OCI-LY7 (cell line): ENCODE measurements at regions of chr11 and their contacts with region 1.

Region 1: DNA sequence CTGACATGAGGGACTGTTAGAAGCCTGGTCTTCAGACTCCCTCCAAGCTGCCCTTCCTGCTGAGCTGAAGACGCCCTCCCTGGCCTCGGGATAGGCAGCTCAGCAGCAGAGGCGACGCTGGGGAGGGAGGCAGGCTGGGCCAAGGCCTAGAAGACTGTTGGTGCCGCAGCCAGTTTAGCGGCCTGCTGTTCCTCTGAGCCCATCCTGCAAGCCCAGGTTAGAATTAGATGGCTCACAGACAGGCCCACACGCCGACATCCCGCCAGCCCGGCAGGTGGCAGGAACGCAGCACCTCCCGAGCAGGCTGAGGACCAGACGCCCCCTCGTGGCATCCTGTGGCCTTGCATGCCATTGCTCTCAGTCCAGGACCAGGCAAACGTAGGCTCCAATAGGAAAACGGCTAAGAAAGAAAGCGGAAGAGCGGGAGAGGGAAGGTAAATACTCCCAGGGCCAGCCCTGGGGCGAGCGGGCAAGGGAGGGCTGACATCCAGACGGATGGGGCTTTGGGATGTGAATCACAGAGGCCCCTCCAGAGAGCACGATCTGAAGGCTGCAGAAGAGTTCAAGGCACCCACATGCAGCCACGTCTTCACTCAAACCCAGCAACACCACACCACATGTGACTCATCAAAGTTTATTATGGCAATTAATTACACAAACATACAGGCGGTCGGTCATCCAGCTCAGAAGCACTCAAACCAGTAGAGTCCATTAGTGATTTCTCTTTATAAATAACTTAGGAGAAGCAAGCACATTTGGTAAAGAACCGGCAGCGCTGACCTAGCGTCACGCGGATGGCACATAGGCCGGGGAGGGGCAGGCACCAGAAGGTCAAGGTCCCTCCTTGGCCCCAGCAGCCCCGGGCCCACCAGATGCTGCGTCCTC is 27.6 kb downstream of the CD5 start:
- DNase-seq: peak; percentile 89
- H3K4me3 ChIP-seq: no peak overlapping the region
- H3K27ac ChIP-seq: no peak overlapping the region
- H3K4me1 ChIP-seq: peaks cover 8% of the 10 kb centered on the region
- CTCF ChIP-seq: peak; percentile 100

Region 2: DNA sequence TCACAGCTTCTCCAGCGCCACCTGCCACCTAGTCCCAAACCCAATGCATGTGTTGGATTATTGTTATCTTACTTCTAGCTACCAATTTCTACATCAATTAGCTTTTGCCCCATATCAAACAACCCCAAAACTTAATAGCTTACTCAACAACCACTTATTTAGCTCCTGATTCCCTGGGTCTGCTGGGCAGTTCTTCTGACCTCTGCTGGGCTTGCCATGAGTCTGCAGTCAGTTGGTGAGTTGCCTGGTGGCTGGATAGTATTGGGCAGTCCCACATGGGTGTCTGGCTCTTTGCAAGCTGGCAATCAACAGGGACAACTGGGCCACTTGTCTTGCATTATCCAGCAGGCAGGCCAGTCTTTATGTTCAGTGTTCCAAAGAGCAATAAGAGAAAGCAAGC is 386.8 kb before region 1 on chr11:
- CTCF ChIA-PET with region 1: no interaction called
- POLR2A ChIA-PET with region 1: no interaction called
- intact Hi-C with region 1: no loop called
- DNase-seq: no peak
- H3K4me3 ChIP-seq: no peak overlapping the region
- H3K27ac ChIP-seq: no peak overlapping the region
- H3K4me1 ChIP-seq: no peaks in the 10 kb centered on the region
- CTCF ChIP-seq: no peak

Region 3: GRCh38 chr11:60775420-60775961 is 354.4 kb before region 1 on chr11:
- CTCF ChIA-PET with region 1: no interaction called
- POLR2A ChIA-PET with region 1: no interaction called
- intact Hi-C with region 1: loop called (anchors 1 kb)
- DNase-seq: peak; percentile 91
- H3K4me3 ChIP-seq: no peak overlapping the region
- H3K27ac ChIP-seq: no peak overlapping the region
- H3K4me1 ChIP-seq: no peaks in the 10 kb centered on the region
- CTCF ChIP-seq: peak; percentile 93

Region 4: GRCh38 chr11:60970369-60970774 is 159.5 kb before region 1 on chr11:
- CTCF ChIA-PET with region 1: no interaction called
- POLR2A ChIA-PET with region 1: no interaction called
- intact Hi-C with region 1: loop called (anchors 1 kb)
- DNase-seq: peak; percentile 66
- H3K4me3 ChIP-seq: no peak overlapping the region
- H3K27ac ChIP-seq: no peak overlapping the region
- H3K4me1 ChIP-seq: no peaks in the 10 kb centered on the region
- CTCF ChIP-seq: peak; percentile 97

Region 5: GRCh38 chr11:61054927-61055562 is 74.8 kb before region 1 on chr11:
- CTCF ChIA-PET with region 1: no interaction called
- POLR2A ChIA-PET with region 1: no interaction called
- intact Hi-C with region 1: loop called (anchors 5 kb)
- DNase-seq: no peak
- H3K4me3 ChIP-seq: no peak overlapping the region
- H3K27ac ChIP-seq: no peak overlapping the region
- H3K4me1 ChIP-seq: no peaks in the 10 kb centered on the region
- CTCF ChIP-seq: no peak

Region 6: DNA sequence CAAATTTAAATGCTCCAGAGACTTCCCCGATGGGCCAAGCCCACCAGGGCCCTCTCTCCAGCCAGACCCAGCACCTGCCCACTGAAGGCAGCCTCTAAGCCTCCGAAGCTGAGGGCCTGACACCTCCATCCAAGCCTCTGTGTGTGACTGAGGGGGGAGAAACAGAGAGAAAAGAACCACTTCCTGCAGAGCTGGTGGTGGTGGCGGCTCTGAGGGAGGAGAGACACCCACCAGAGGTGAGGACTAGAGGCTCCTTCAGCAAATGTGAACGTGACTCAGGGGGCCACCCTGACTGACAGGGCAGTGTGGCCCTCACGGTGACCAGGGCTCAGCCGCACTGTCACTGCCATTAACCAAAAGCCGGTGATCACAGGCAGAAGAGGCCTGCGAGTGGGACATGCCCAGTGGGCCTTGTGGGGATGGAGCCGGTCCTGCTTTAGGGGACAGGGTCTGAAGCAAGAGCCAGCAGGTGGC is 58.6 kb before region 1 on chr11:
- CTCF ChIA-PET with region 1: no interaction called
- POLR2A ChIA-PET with region 1: no interaction called
- intact Hi-C with region 1: loop called (anchors 10 kb)
- DNase-seq: peak; percentile 72
- H3K4me3 ChIP-seq: peak overlapping the region; percentile 40
- H3K27ac ChIP-seq: peak overlapping the region; percentile 93
- H3K4me1 ChIP-seq: peaks cover 30% of the 10 kb centered on the region
- CTCF ChIP-seq: no peak

Region 7: DNA sequence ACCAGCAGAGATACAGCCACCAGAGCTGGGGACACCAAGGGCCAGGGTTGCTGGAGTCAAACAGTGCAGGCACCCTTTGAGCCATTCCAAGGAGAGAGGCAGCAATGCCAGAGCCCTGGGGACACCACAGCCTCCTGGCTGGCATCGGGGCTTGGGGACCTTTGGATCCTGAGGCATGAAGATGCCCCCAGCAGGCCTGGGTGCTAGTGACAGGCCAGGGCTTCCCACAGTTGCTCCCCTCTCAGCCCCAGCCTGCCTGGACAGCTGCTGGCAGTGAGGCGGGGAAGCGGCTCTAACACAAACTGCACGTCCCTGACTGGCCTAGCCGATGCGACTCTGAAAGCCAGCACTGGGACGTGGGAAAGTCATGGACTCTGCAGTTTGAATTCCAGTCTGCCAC is 24.9 kb before region 1 on chr11:
- CTCF ChIA-PET with region 1: no interaction called
- POLR2A ChIA-PET with region 1: no interaction called
- intact Hi-C with region 1: no loop called
- DNase-seq: no peak
- H3K4me3 ChIP-seq: no peak overlapping the region
- H3K27ac ChIP-seq: no peak overlapping the region
- H3K4me1 ChIP-seq: no peaks in the 10 kb centered on the region
- CTCF ChIP-seq: no peak

Region 8: GRCh38 chr11:61187505-61188130 is 57.7 kb after region 1 on chr11:
- CTCF ChIA-PET with region 1: no interaction called
- POLR2A ChIA-PET with region 1: no interaction called
- intact Hi-C with region 1: loop called (anchors 1 kb)
- DNase-seq: peak; percentile 85
- H3K4me3 ChIP-seq: no peak overlapping the region
- H3K27ac ChIP-seq: no peak overlapping the region
- H3K4me1 ChIP-seq: no peaks in the 10 kb centered on the region
- CTCF ChIP-seq: peak; percentile 95